CD4-positive, alpha-beta T cell (primary cell): ENCODE measurements at regions of chr9 and their contacts with region 1.

Region 1: GRCh38 chr9:91150998-91151717 is 210.6 kb downstream of the AUH start:
- DNase-seq: peak in 3 of 14 experiments; percentile 80 to 88 (median 84)
- ATAC-seq: peak; percentile 86
- H3K4me3 ChIP-seq: no peak overlapping the region
- H3K4me3 Mint-ChIP-seq: peak overlapping the region; percentile 7
- H3K27ac ChIP-seq: no peak overlapping the region
- H3K27ac Mint-ChIP-seq: peak overlapping the region; percentile 43
- H3K4me1 ChIP-seq: peaks cover 24% of the 10 kb centered on the region
- H3K4me1 Mint-ChIP-seq: peaks cover 51% of the 10 kb centered on the region
- H3K27me3 ChIP-seq: no peaks in the 10 kb centered on the region
- H3K27me3 Mint-ChIP-seq: no peaks in the 10 kb centered on the region
- CTCF ChIP-seq: no peak

Region 2: DNA sequence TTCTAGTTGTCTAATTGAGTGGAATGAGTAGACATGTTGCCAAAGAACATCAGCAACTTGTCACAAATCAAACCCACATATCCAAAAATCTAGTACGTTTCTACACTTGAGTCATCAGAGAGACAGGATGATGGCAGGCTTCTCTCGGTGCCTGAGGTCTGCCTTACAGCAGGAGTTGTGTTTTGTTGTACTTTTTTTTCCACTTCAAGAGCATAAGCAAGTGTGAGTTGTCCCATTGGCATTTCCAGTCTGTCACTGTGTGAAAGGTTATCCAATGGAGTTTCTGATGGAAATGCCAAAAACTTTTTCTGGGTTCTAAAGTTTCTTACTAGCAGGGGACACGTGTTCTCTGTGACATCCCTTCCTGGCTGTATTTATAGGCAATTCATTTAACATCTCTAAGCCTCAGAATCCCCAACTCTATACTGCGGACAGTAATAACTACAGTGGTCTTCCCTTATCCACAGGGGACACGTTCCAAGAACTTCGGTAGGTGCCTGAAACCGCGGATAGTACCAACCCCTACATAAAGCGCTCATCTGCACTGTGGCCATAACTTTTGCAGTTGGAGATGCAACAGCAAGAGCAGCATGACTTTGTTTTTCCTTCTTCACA is 103.1 kb before region 1 on chr9:
- CTCF ChIA-PET with region 1: no interaction called
- POLR2A ChIA-PET with region 1: interaction called, 3 read pairs
- intact Hi-C with region 1: loop called in 1 of 2 experiments (anchors 5 kb)
- DNase-seq: no peak
- ATAC-seq: peak; percentile 59
- H3K4me3 ChIP-seq: no peak overlapping the region
- H3K4me3 Mint-ChIP-seq: peak overlapping the region; percentile 40
- H3K27ac ChIP-seq: no peak overlapping the region
- H3K27ac Mint-ChIP-seq: no peak overlapping the region
- H3K4me1 ChIP-seq: peaks cover 14% of the 10 kb centered on the region
- H3K4me1 Mint-ChIP-seq: peaks cover 19% of the 10 kb centered on the region
- H3K27me3 ChIP-seq: peaks cover 23 to 26% of the 10 kb centered on the region in 2 experiments
- H3K27me3 Mint-ChIP-seq: peaks cover 42% of the 10 kb centered on the region
- CTCF ChIP-seq: no peak

Region 3: GRCh38 chr9:91119142-91119541 is 32.0 kb before region 1 on chr9:
- CTCF ChIA-PET with region 1: no interaction called
- POLR2A ChIA-PET with region 1: no interaction called
- intact Hi-C with region 1: no loop called
- DNase-seq: no peak
- ATAC-seq: no peak
- H3K4me3 ChIP-seq: no peak overlapping the region
- H3K4me3 Mint-ChIP-seq: no peak overlapping the region
- H3K27ac ChIP-seq: no peak overlapping the region
- H3K27ac Mint-ChIP-seq: no peak overlapping the region
- H3K4me1 ChIP-seq: no peaks in the 10 kb centered on the region
- H3K4me1 Mint-ChIP-seq: no peaks in the 10 kb centered on the region
- H3K27me3 ChIP-seq: peaks cover 7 to 9% of the 10 kb centered on the region in 2 experiments
- H3K27me3 Mint-ChIP-seq: peaks cover 39% of the 10 kb centered on the region
- CTCF ChIP-seq: no peak